Activated CD4-positive, alpha-beta T cell treated with anti-CD3 and anti-CD28 coated beads, Interleukin-2, amount 10 ng/mL, durations not matched to agents 24 days and 14 days (primary cell): ENCODE measurements at regions of chr19 and their contacts with region 1.

Region 1: DNA sequence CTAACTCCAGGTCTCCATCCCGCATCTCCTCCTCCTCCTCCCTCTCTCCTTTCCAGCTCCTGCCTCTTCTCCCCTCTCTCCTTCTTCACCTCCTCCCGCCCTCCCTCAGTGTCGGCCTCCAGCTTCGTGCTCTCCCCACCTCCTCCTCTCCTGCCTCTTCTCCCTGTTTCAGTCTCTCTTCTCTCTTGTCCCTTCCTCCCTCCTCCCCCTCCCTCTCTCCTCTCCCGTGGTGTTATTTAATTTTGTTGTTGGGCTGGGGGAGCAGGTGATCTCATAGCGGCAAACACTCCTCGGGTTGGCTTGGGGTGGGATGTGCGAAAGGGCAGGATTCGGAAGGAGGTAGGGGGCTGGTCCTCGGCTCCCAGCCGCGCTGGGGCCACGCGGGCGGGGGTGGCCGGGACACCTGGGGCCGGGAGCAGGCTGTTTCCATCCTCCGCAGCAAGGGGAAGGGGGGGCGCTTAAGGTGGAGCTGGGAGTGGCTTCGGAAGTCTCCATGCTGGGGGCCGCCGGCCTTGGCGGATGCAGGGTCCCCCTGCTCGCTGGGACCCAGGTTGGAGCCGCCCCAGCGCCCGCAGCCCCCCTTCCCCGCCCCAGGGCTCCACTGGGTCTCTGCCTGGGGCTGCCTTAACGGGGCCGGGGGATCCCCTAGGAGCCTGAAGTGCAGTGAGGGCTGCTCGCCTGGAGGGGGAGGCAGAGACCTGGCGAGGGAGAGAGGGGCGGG is at the start of gene CA11:
- DNase-seq: peak; percentile 97
- H3K4me3 Mint-ChIP-seq: peak within 1 kb of the TSS; percentile 96
- H3K27ac Mint-ChIP-seq: peak within 1 kb of the TSS; percentile 89
- H3K4me1 Mint-ChIP-seq: peaks cover 37% of the 10 kb centered on the region
- H3K27me3 Mint-ChIP-seq: peaks cover 2% of the 10 kb centered on the region
- total RNA-seq, gene CA11: 10.9 and 12.5 TPM in 2 replicates

Region 2: GRCh38 chr19:48713864-48714758 is 68.0 kb after region 1 on chr19:
- intact Hi-C with region 1: loop called (anchors 5 kb)
- DNase-seq: peak; percentile 100
- H3K4me3 Mint-ChIP-seq: peak overlapping the region; percentile 88
- H3K27ac Mint-ChIP-seq: peak overlapping the region; percentile 87
- H3K4me1 Mint-ChIP-seq: peaks cover 12% of the 10 kb centered on the region
- H3K27me3 Mint-ChIP-seq: no peaks in the 10 kb centered on the region

Region 3: DNA sequence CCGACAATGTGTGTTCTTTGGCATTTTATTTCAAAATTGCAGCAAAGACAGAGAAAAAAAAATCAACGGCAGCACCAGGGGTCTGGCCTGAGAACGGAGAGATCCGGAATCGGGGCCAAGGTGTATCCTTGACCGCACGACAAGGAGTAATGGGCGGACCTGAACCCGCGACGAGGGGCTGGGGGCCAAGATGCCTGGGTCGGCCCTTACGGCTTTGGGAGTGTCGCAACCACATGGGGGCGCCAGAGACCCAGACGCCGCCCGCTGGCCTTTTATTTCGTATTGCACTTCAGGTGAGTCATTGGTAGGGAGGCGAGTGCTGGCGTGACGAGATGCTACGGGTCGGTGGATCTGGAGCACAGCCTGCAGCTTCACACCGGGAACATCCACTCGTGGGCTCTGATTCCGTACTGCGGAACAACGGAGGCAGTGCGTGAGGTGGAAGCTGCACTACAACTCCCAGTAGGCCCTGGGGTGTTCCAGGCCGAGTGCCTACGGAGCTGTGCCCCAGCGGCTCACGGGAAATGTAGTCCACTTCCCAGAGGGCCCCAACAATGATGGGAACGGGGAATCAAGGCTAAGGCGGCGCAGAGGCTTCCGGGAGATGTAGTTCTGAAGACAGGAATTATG is 149.0 kb after region 1 on chr19:
- intact Hi-C with region 1: loop called (anchors 2 kb)
- DNase-seq: peak; percentile 95
- H3K4me3 Mint-ChIP-seq: peak overlapping the region; percentile 95
- H3K27ac Mint-ChIP-seq: peak overlapping the region; percentile 90
- H3K4me1 Mint-ChIP-seq: peaks cover 12% of the 10 kb centered on the region
- H3K27me3 Mint-ChIP-seq: no peaks in the 10 kb centered on the region

Region 4: GRCh38 chr19:48842789-48843162 is 196.6 kb after region 1 on chr19:
- intact Hi-C with region 1: loop called (anchors 2 kb)
- DNase-seq: peak; percentile 88
- H3K4me3 Mint-ChIP-seq: no peak overlapping the region
- H3K27ac Mint-ChIP-seq: no peak overlapping the region
- H3K4me1 Mint-ChIP-seq: peaks cover under 1% of the 10 kb centered on the region
- H3K27me3 Mint-ChIP-seq: peaks cover 3% of the 10 kb centered on the region